ENCODE measurements at regions of chr12 and their contacts with region 1.

Region 1: GRCh38 chr12:11581179-11581755 is 68.2 kb upstream of the ETV6 start:
- DNase-seq: peak; percentile 67
- H3K4me3 Mint-ChIP-seq: no peak overlapping the region
- H3K27ac Mint-ChIP-seq: no peak overlapping the region
- H3K4me1 Mint-ChIP-seq: peaks cover 40% of the 10 kb centered on the region
- H3K27me3 Mint-ChIP-seq: no peaks in the 10 kb centered on the region
- CTCF ChIP-seq: peak; percentile 61

Region 2: DNA sequence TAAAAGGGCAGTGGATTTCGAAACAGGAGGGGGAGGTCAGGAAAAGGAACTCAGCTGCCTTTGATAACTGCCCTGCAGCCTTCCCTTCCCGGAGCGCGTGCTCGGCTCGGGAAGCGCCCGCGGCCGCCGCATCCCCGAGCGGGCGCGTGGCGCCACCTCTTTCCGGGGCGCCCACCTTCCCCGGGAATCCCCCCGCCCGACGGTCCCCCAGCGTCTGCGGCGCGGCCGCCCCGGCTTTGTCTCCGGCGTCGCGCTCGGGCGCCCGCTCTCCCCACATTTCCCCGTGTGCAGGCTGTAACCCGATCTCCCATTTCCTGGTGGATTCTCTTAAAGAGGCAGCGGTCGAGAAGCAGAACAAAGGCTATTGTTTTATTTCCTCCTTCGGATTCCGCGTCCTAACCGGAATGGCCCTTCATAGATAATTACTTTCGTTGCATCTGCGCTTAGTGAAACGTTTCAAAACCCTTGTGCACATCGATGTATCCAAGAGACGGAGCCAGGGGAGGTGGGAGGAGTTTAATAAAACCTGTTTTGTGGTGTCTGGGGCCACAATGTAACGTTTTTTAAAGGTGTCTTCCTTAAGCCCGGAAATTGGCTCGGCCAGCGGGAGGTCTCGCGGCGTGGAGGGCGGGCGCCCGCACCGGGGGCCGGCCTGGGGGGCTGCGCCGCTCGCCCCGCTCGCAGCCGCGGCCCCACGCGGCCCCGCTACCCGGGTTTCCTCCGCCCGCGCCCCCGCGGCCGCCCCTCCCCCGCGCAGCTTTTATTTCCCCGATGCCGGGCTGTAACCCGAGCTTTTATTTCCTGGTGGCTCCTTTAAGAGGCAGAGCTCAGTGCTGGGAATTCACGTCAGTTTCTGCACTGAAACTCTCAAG is 67.8 kb after region 1 on chr12 and contains the start of gene ETV6:
- CTCF ChIA-PET with region 1: interaction called, 3 read pairs
- intact Hi-C with region 1: loop called (anchors 2 kb)
- DNase-seq: peak; percentile 79
- H3K4me3 Mint-ChIP-seq: peak within 1 kb of the TSS; percentile 84
- H3K27ac Mint-ChIP-seq: peak within 1 kb of the TSS; percentile 97
- H3K4me1 Mint-ChIP-seq: peaks cover 14% of the 10 kb centered on the region
- H3K27me3 Mint-ChIP-seq: no peaks in the 10 kb centered on the region
- CTCF ChIP-seq: no peak
- total RNA-seq, gene ETV6: 80.6 and 89.1 TPM in 2 replicates

Region 3: GRCh38 chr12:11730299-11731041 is 149.2 kb after region 1 on chr12:
- CTCF ChIA-PET with region 1: no interaction called
- intact Hi-C with region 1: loop called (anchors 5 kb)
- DNase-seq: peak; percentile 81
- H3K4me3 Mint-ChIP-seq: peak overlapping the region; percentile 58
- H3K27ac Mint-ChIP-seq: peak overlapping the region; percentile 98
- H3K4me1 Mint-ChIP-seq: peaks cover 60% of the 10 kb centered on the region
- H3K27me3 Mint-ChIP-seq: no peaks in the 10 kb centered on the region
- CTCF ChIP-seq: no peak

Region 4: GRCh38 chr12:11812586-11813427 is 231.5 kb after region 1 on chr12:
- CTCF ChIA-PET with region 1: interaction called, 3 read pairs
- intact Hi-C with region 1: loop called (anchors 5 kb)
- DNase-seq: peak; percentile 42
- H3K4me3 Mint-ChIP-seq: peak overlapping the region; percentile 71
- H3K27ac Mint-ChIP-seq: peak overlapping the region; percentile 96
- H3K4me1 Mint-ChIP-seq: peaks cover 72% of the 10 kb centered on the region
- H3K27me3 Mint-ChIP-seq: no peaks in the 10 kb centered on the region
- CTCF ChIP-seq: no peak

Region 5: DNA sequence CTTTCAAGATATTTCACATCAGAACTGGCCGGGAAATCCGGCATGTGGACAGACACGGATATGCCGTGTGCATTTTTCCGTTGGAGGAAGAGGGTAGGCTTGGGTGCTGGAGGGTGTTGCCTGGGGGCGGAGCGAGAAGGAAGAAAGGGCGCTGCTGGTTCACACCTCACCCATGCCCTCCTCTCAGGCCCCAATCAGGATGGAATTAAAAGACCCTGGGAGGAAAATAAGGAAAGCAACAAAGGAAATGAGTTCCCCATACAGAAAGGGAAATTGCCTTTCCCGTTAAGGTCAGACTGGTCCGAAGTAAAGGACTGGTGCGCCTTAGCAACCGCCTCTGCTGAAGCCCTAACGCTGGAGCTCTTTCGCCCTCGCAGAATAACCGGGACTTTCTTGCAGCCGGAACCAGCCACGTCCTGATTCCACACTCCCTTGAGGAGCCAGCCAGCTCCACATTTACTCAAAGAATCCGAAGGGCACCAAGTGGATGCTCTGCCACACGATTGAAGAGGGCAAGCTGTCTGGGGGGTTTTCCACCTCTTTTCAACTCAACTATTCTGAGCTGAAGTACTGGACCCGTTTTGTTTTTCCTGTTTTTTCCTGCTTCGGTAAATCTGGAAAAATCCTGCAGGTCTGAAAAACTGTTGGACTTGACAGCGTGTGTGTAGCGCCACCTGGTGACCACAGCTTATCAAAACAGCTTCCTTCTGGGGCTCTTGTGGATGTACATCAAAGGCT is 451.8 kb after region 1 on chr12:
- CTCF ChIA-PET with region 1: interaction called, 40 read pairs
- intact Hi-C with region 1: loop called (anchors 1 kb)
- DNase-seq: peak; percentile 82
- H3K4me3 Mint-ChIP-seq: peak overlapping the region; percentile 63
- H3K27ac Mint-ChIP-seq: peak overlapping the region; percentile 79
- H3K4me1 Mint-ChIP-seq: peaks cover 14% of the 10 kb centered on the region
- H3K27me3 Mint-ChIP-seq: no peaks in the 10 kb centered on the region
- CTCF ChIP-seq: peak; percentile 70

Measured in Calu3 (cell line).